ENCODE measurements at regions of chr5 and their contacts with region 1.

Region 1: GRCh38 chr5:115309751-115310370 is 13.4 kb upstream of the CCDC112 start:
- DNase-seq: no peak
- H3K4me3 Mint-ChIP-seq: no peak overlapping the region
- H3K27ac Mint-ChIP-seq: no peak overlapping the region
- H3K4me1 Mint-ChIP-seq: no peaks in the 10 kb centered on the region
- H3K27me3 Mint-ChIP-seq: peaks cover 8% of the 10 kb centered on the region

Region 2: GRCh38 chr5:115241881-115242642 is 67.8 kb before region 1 on chr5:
- CTCF ChIA-PET with region 1: no interaction called
- POLR2A ChIA-PET with region 1: no interaction called
- intact Hi-C with region 1: no loop called
- DNase-seq: no peak
- H3K4me3 Mint-ChIP-seq: no peak overlapping the region
- H3K27ac Mint-ChIP-seq: no peak overlapping the region
- H3K4me1 Mint-ChIP-seq: peaks cover 11% of the 10 kb centered on the region
- H3K27me3 Mint-ChIP-seq: no peaks in the 10 kb centered on the region

Region 3: DNA sequence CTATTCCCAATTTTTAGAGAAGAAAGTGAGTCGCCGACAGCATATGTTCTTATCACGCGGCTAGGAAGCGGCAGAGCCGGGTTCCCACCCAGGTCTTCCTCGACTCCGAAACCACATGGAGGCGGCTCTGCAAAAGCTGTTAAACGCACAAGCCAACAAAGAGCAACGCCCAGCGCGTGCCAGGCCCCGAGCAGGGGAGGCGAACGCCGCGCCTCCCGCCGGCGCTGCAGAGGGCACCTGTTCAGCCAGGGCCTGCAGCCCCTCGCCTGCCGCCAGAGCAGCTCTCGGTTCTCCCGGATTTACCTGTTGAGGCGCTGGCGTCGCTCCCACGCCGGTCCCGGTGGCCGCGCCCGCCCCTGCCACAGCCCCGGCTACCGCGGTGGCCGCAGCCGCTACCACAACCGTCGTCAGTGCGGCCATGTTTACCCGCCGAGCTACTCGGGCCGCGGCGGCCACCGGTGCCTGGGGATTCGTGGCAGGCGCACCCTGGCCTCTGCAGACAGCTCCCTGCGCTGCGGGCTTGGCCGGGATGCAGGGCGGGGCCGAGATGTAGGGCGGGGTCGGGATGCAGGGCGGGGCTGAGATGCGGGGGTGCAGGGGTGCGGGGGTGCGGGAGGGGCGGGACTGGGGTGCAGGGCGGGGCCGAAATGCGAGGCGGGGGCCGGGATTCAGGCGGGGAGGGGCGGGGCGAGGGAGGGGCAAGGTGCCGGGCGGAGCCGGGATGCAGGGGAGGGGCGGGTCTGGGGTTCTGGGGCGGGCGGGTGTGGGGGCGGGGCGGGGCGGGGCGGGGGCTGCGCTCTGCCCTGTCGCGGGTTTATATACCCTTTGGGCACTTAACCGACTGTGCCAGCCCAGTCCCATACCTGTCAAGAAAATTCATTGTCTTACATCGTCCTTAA is 13.5 kb before region 1 on chr5 and contains the start of gene CCDC112:
- CTCF ChIA-PET with region 1: interaction called, 10 read pairs
- POLR2A ChIA-PET with region 1: no interaction called
- intact Hi-C with region 1: no loop called
- DNase-seq: peak; percentile 87
- H3K4me3 Mint-ChIP-seq: peak within 1 kb of the TSS; percentile 76
- H3K27ac Mint-ChIP-seq: no peak within 1 kb of the TSS
- H3K4me1 Mint-ChIP-seq: peaks cover 7% of the 10 kb centered on the region
- H3K27me3 Mint-ChIP-seq: peaks cover 8% of the 10 kb centered on the region
- total RNA-seq, gene CCDC112: 1.7 to 1.8 TPM

Region 4: DNA sequence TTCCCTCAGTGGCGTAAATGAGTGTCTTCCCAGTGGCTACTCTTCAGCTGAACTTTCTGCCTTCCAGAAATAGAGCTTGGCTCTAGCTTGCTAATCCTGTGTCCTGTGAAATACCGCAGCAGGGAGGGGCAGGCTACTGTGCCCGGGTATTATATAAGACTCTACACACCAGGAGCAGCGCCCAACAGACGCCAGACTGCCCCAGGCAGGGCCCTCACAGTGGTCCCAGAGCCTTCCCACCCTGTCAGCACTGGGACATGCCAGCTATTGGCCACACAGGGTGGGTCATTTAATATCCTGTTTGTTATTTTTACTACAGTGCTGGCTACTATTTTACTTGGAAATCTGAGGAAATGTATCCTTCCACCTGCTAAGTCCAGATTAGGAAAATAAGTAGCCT is 113.7 kb after region 1 on chr5:
- CTCF ChIA-PET with region 1: no interaction called
- POLR2A ChIA-PET with region 1: no interaction called
- intact Hi-C with region 1: no loop called
- DNase-seq: no peak
- H3K4me3 Mint-ChIP-seq: no peak overlapping the region
- H3K27ac Mint-ChIP-seq: no peak overlapping the region
- H3K4me1 Mint-ChIP-seq: no peaks in the 10 kb centered on the region
- H3K27me3 Mint-ChIP-seq: peaks cover 11% of the 10 kb centered on the region

Region 5: DNA sequence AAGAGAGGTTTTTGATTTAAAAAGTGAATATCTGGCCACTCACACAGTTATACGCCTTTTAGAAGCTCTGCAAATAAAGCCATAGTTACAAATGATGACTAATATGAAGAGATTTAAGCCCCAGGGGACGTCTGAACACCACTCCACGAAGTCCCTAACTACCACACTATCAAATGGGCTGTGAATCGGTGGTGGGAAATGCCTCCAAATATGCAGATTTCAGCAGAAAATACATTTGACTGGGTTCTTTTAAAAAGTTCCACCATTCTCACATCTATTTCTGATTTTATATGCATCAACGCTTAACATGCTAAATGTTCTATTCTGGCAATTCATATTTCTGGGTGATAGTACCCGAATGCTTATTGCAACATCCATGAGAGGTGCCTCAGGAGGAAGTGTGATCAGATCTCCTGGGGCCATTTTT is 269.9 kb after region 1 on chr5:
- CTCF ChIA-PET with region 1: interaction called, 212 read pairs
- POLR2A ChIA-PET with region 1: no interaction called
- intact Hi-C with region 1: loop called (anchors 1 kb)
- DNase-seq: no peak
- H3K4me3 Mint-ChIP-seq: no peak overlapping the region
- H3K27ac Mint-ChIP-seq: no peak overlapping the region
- H3K4me1 Mint-ChIP-seq: no peaks in the 10 kb centered on the region
- H3K27me3 Mint-ChIP-seq: no peaks in the 10 kb centered on the region

Region 6: GRCh38 chr5:115586601-115587048 is 276.8 kb after region 1 on chr5:
- CTCF ChIA-PET with region 1: interaction called, 23 read pairs
- POLR2A ChIA-PET with region 1: no interaction called
- intact Hi-C with region 1: loop called (anchors 1 kb)
- DNase-seq: no peak
- H3K4me3 Mint-ChIP-seq: no peak overlapping the region
- H3K27ac Mint-ChIP-seq: no peak overlapping the region
- H3K4me1 Mint-ChIP-seq: no peaks in the 10 kb centered on the region
- H3K27me3 Mint-ChIP-seq: no peaks in the 10 kb centered on the region

Measured in activated CD4-positive, alpha-beta memory T cell treated with anti-CD3 and anti-CD28 coated beads for 36 hours (primary cell).